ENCODE measurements at regions of chr15 and their contacts with region 1.

Region 1: DNA sequence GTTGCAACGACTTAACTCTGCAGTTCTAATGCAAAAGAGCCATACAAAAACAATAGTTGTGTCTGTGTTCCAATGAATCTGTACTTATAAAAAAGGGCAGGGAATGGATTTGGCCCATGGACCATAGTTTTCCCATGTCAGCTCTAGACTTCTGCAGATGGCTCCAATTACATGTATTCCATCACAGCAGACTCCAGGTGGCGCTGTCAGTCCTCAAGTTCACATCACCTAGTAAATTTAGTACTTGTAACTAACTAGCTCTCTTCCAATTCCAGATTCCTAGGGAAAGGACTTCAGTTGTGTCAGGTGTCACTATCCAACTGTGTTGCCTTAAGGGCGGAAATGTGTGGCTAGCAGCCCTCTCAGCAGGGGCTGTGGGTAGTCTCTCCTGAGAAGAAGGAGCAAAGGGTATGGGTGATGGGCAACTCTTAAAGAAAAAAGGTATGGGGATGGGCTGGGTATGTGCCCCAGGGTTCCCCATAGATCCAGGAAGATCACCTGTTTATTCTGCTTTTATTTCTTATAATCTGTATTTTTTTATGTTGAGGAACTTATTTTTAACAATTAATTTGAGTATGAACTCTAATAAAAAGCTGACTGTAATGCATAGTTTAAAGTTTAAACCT is 36.2 kb downstream of the BBS4 start:
- DNase-seq: peak; percentile 29
- H3K4me3 ChIP-seq: no peak overlapping the region
- CTCF ChIP-seq: peak; percentile 65

Region 2: GRCh38 chr15:72706266-72706665 is 15.9 kb before region 1 on chr15:
- CTCF ChIA-PET with region 1: interaction called, 32 read pairs
- POLR2A ChIA-PET with region 1: no interaction called
- DNase-seq: no peak
- H3K4me3 ChIP-seq: no peak overlapping the region
- CTCF ChIP-seq: no peak

Region 3: DNA sequence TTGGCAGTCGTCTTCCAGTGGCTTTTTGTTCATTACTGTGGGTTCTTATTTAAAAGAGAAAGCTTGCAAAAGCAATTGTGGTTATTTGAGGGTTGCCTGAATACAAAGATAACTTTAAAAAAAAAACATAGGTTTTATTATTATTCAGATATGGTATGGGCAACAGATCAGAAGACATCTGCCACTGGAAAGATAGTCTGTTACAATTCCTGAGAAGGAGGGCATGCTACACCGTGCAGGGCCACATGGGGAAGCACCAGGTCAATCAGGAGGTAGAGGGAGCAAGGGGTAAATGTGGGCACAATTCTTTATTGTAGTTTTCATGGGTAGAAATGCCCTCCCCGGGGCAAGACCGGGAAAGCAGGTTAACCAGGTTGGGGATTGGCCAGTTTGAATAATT is 10.3 kb after region 1 on chr15:
- CTCF ChIA-PET with region 1: interaction called, 118 read pairs
- POLR2A ChIA-PET with region 1: no interaction called
- DNase-seq: no peak
- H3K4me3 ChIP-seq: no peak overlapping the region
- CTCF ChIP-seq: no peak

Region 4: GRCh38 chr15:72740219-72740618 is 18.0 kb after region 1 on chr15:
- CTCF ChIA-PET with region 1: interaction called, 118 read pairs
- POLR2A ChIA-PET with region 1: no interaction called
- DNase-seq: no peak
- H3K4me3 ChIP-seq: no peak overlapping the region
- CTCF ChIP-seq: no peak

Region 5: GRCh38 chr15:72783563-72784237 is 61.5 kb after region 1 on chr15 and contains the start of gene ADPGK:
- CTCF ChIA-PET with region 1: interaction called, 13 read pairs
- POLR2A ChIA-PET with region 1: no interaction called
- DNase-seq: peak; percentile 57
- H3K4me3 ChIP-seq: peak within 1 kb of the TSS; percentile 92
- CTCF ChIP-seq: no peak

Region 6: GRCh38 chr15:72916897-72917296 is 194.7 kb after region 1 on chr15:
- CTCF ChIA-PET with region 1: no interaction called
- POLR2A ChIA-PET with region 1: no interaction called
- DNase-seq: no peak
- H3K4me3 ChIP-seq: no peak overlapping the region
- CTCF ChIP-seq: no peak

Region 7: GRCh38 chr15:73081321-73081958 is 359.3 kb after region 1 on chr15:
- CTCF ChIA-PET with region 1: interaction called, 60 read pairs
- POLR2A ChIA-PET with region 1: no interaction called
- DNase-seq: no peak
- H3K4me3 ChIP-seq: no peak overlapping the region
- CTCF ChIP-seq: peak; percentile 42

Measured in AG04449 (cell line).